ENCODE measurements at regions of chr9 and their contacts with region 1.

Region 1: DNA sequence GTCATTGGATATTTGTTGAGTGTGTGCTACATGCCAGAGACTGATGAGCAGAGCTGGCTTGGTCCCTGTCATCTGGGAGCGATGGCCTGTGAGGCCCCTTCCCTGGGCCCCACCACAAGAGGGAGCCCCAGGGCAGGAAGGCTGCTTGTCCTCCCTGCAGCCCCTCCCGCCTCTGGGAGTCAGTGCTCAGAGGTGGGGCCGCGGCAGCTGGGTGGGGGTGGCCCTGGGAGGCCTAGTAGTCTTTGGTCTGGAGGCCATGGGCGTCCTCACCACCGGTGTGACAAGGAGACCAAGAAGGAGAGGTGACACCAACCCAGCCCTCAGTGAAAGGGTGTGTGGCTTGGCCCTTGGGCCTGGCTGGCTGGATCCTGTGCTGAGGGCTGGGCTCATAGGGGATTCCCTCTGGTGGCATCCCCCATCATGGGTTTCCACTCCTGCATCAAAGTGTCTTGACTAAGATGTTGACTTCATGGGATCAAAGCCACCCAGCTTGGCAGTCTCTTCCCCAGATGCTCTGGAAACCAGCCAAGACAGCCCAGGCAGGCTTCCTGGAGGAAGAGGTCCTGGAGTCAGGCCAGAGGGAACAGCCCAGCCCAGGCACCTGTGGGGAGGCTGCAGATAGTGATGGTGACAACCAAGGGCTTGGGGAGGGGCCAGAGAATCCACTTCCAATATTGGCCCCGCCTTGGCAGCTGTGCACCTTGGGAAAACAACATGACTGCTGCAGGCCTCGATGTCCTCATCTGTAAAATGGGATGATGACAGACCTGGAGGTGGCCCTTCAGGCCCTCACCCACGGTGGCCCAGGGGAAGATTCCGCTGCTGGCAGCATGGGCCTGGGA is 166.7 kb downstream of the GAPVD1 start:
- DNase-seq: peak in 1 of 2 experiments; percentile 57
- H3K4me3 ChIP-seq: no peak overlapping the region
- H3K27ac ChIP-seq: no peak overlapping the region
- H3K4me1 ChIP-seq: no peaks in the 10 kb centered on the region
- H3K27me3 ChIP-seq: no peaks in the 10 kb centered on the region
- CTCF ChIP-seq: peak; percentile 73

Region 2: GRCh38 chr9:125038166-125038565 is 390.1 kb before region 1 on chr9:
- CTCF ChIA-PET with region 1: no interaction called
- POLR2A ChIA-PET with region 1: no interaction called
- intact Hi-C with region 1: no loop called
- DNase-seq: no peak
- H3K4me3 ChIP-seq: no peak overlapping the region
- H3K27ac ChIP-seq: no peak overlapping the region
- H3K4me1 ChIP-seq: no peaks in the 10 kb centered on the region
- H3K27me3 ChIP-seq: no peaks in the 10 kb centered on the region
- CTCF ChIP-seq: no peak

Region 3: GRCh38 chr9:125631391-125632085 is 203.3 kb after region 1 on chr9:
- CTCF ChIA-PET with region 1: no interaction called
- POLR2A ChIA-PET with region 1: no interaction called
- intact Hi-C with region 1: loop called (anchors 10 kb)
- DNase-seq: no peak
- H3K4me3 ChIP-seq: no peak overlapping the region
- H3K27ac ChIP-seq: 0 out of 2 replicates have a peak overlapping the region, but pooled peaks have one; percentile 42
- H3K4me1 ChIP-seq: peaks cover 47% of the 10 kb centered on the region
- H3K27me3 ChIP-seq: no peaks in the 10 kb centered on the region
- CTCF ChIP-seq: peak; percentile 66

Region 4: DNA sequence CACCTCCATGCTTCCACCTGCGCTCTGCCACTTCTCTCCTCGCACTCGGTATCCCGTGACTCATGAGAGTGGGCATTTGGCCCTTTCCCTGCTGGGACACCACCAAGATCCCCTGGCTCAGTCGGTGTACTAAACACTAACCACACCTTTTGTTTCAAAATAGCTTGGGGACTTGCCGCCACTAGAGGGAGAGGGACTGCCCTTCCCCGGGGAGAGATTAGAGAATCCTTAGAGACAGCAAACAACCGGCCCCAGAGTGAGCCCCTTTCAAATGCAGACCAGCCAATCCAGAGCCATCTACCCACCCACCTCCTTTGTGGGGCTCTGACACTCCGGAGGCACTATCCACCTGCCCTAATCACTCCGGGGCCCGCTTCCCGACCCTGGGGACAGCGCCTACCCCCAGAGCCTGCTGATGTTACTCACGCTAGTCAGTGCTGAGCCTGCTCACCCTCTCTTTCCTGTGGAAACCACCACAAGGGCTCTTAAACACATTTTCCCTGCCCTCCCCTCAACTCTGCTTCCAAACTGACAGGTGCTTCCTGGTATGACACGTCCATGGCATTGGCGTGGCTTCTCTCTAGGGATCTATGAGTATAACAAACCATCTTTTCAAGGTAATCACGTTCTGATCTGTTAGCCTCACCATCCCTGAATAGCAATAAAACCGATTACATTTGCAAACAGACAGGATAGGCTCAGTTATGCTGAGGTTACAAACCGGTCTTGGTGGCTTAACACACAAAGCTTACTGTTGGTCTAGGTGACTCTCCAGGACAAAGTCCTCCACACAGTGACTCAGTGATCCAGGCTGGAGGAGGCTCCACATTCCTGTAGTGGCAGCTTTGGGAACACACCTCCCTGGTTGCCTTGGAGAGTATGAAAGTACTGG is 718.2 kb after region 1 on chr9:
- CTCF ChIA-PET with region 1: interaction called, 12 read pairs
- POLR2A ChIA-PET with region 1: no interaction called
- intact Hi-C with region 1: no loop called
- DNase-seq: peak in 1 of 2 experiments; percentile 15
- H3K4me3 ChIP-seq: no peak overlapping the region
- H3K27ac ChIP-seq: no peak overlapping the region
- H3K4me1 ChIP-seq: no peaks in the 10 kb centered on the region
- H3K27me3 ChIP-seq: peaks cover 95% of the 10 kb centered on the region
- CTCF ChIP-seq: peak; percentile 56; the same call in 1 of the 2 replicates

Region 5: DNA sequence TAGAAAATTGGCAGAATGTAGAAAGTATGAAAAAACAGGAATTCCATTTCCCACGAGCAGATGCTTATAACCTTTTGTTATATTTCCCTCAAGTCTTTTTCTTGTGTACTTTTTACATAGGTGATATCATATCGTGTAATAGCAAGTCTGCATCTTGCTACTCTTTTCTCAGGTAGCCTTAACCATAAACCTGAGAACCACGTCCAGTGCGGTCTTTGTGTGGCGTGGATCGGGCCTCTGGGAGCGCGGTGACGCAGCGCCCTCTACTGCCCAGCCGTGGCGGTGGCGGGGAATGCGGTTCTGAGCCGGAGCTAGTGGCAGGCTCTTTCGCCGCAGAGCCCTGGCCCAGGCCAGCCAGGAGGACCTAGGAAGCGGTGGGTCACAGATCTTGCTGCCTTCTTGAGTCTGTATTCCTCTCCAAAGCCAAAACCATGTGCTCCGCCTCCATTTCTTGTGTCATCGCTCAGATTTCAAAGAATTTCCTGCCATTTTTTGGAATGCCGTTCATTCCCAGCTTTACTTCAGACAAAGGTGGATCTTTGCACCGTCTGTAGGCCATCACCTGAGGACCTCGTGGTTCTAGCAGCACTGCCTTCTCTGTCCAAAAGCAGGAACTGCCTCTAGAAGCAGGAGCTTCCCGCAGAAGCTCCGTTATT is 970.2 kb after region 1 on chr9:
- CTCF ChIA-PET with region 1: no interaction called
- POLR2A ChIA-PET with region 1: no interaction called
- intact Hi-C with region 1: loop called (anchors 1 kb)
- DNase-seq: peak in 1 of 2 experiments; percentile 84
- H3K4me3 ChIP-seq: no peak overlapping the region
- H3K27ac ChIP-seq: no peak overlapping the region
- H3K4me1 ChIP-seq: no peaks in the 10 kb centered on the region; the same call in 1 of the 2 replicates
- H3K27me3 ChIP-seq: no peaks in the 10 kb centered on the region
- CTCF ChIP-seq: peak; percentile 98

Region 6: DNA sequence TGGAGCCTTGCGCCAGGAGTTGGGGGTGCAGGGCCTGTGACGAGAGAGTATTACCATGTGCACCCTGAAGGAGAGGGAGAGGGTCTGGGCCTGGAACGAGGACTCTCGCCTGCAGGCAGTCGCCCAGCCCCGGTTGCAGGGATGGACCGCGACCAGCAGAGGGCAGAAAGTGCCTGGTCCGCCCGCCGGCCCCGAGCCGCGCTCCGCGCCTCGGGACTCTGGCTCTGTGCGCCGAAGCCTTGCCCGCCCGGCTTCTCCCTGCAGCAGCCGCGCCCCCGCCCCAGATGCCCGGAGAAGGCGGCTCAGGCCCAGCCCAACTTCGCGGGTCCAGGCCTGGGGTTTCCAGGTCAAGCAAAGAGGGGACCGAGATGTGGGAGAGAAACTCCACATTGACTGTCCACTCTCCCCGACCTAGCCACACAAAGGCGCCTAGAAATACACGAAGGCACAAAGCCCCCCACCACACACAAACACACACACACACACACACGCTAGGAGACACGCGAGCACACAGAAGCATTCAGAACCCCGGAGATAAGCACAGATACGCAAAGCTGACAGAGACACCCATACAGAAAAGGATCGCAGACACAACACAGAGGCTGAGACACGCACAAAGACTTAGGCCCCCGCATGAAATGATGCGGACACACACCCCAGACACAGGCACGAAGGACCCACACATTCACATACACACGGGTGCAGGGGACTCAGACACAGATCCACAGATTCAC is 1183.5 kb after region 1 on chr9:
- CTCF ChIA-PET with region 1: no interaction called
- POLR2A ChIA-PET with region 1: no interaction called
- intact Hi-C with region 1: no loop called
- DNase-seq: peak in 1 of 2 experiments; percentile 81
- H3K4me3 ChIP-seq: no peak overlapping the region
- H3K27ac ChIP-seq: no peak overlapping the region
- H3K4me1 ChIP-seq: no peaks in the 10 kb centered on the region
- H3K27me3 ChIP-seq: peaks cover 46% of the 10 kb centered on the region
- CTCF ChIP-seq: peak; percentile 81

Region 7: DNA sequence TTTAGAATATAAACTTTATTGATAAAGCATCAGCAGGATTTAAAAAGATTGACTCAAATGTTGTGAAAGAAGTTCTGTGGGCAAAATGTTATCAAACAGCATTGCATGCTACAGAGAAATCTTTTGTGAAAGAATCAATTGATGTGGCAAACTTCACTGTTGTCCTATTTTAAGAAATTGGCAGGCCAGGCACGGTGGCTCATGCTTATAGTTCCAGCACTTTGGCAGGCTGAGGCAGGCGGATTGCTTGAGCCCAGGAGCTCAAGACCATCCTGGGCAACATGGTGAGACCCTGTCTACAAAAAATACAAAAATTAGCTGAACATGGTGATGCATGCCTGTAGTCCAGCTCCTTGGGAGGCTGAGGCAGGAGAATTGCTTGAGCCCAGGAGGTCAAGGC is 1394.0 kb after region 1 on chr9:
- CTCF ChIA-PET with region 1: interaction called, 10 read pairs
- POLR2A ChIA-PET with region 1: no interaction called
- intact Hi-C with region 1: no loop called
- DNase-seq: no peak
- H3K4me3 ChIP-seq: no peak overlapping the region
- H3K27ac ChIP-seq: no peak overlapping the region
- H3K4me1 ChIP-seq: no peaks in the 10 kb centered on the region
- H3K27me3 ChIP-seq: no peaks in the 10 kb centered on the region
- CTCF ChIP-seq: no peak